HEK293 (cell line): ENCODE measurements at regions of chr6 and their contacts with region 1.

Region 1: GRCh38 chr6:158869826-158870648 is 50.9 kb upstream of the EZR start:
- H3K4me3 ChIP-seq: peak overlapping the region; percentile 64
- H3K27ac ChIP-seq: peak overlapping the region; percentile 62
- H3K4me1 ChIP-seq: no peaks in the 10 kb centered on the region
- CTCF ChIP-seq: no peak; the same call in 1 of the 2 replicates

Region 2: DNA sequence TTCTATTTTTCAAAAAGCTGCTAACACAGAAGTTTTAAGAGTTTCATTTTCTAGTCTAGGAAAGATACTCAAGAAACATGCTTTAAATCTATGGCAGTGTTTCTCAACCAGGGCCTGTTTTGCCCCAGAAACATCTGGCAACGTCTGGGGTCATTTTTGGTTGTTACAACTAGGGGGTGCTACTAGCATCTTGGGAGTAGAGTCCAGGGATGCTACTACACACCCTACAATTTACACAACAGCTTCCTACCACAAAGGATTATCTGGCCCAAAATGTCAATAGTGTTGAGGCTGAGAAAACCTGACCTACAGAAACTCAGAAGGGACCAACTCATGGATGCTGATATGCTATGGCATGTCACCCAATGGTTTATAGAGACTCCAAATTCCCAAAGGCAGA is 726.3 kb before region 1 on chr6:
- CTCF ChIA-PET with region 1: no interaction called
- POLR2A ChIA-PET with region 1: no interaction called
- H3K4me3 ChIP-seq: no peak overlapping the region
- H3K27ac ChIP-seq: no peak overlapping the region
- H3K4me1 ChIP-seq: no peaks in the 10 kb centered on the region
- CTCF ChIP-seq: no peak

Region 3: DNA sequence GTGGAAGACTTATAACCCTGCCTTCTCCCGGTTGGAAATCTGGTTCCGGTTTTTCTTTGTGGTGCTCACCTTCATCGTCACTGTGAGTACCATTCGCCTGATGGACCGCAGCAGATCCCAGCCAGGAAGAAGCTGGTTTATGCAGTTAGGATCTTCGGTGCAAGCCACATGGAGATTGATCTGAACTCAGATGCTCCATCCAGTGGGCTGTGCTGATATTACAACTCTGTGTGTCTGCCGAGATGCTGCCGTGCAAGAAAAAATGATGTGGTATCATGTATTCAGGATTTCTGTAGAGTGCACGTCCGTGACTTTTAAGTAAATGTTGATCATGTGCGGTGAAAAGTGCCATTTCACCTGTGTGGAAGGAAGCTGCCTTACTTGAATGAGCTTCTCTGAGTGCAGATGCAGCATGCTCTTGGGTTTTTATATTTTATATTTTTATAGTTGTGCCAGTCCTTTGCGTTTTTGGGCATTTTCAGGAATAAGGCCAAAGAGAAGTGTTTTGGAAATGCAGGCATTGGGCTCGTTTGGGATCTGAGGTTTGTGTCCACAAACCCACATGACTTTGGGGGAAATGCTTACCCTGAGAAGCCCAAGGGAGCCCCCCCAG is 264.7 kb before region 1 on chr6:
- CTCF ChIA-PET with region 1: no interaction called
- POLR2A ChIA-PET with region 1: no interaction called
- H3K4me3 ChIP-seq: no peak overlapping the region
- H3K27ac ChIP-seq: no peak overlapping the region
- H3K4me1 ChIP-seq: no peaks in the 10 kb centered on the region
- CTCF ChIP-seq: no peak; the same call in 1 of the 2 replicates

Region 4: GRCh38 chr6:158799051-158799792 is 70.8 kb before region 1 on chr6:
- CTCF ChIA-PET with region 1: no interaction called
- POLR2A ChIA-PET with region 1: interaction called, 10 read pairs
- H3K4me3 ChIP-seq: no peak overlapping the region
- H3K27ac ChIP-seq: peak overlapping the region; percentile 74
- H3K4me1 ChIP-seq: peaks cover 34% of the 10 kb centered on the region
- CTCF ChIP-seq: no peak

Region 5: GRCh38 chr6:158819213-158819909 is 50.7 kb before region 1 on chr6 and contains the start of gene EZR:
- CTCF ChIA-PET with region 1: interaction called, 3 read pairs
- POLR2A ChIA-PET with region 1: interaction called, 31 read pairs
- H3K4me3 ChIP-seq: peak within 1 kb of the TSS; percentile 80
- H3K27ac ChIP-seq: peak within 1 kb of the TSS; percentile 84
- H3K4me1 ChIP-seq: peaks cover 10% of the 10 kb centered on the region
- CTCF ChIP-seq: peak; percentile 41; the same call in 1 of the 2 replicates

Region 6: DNA sequence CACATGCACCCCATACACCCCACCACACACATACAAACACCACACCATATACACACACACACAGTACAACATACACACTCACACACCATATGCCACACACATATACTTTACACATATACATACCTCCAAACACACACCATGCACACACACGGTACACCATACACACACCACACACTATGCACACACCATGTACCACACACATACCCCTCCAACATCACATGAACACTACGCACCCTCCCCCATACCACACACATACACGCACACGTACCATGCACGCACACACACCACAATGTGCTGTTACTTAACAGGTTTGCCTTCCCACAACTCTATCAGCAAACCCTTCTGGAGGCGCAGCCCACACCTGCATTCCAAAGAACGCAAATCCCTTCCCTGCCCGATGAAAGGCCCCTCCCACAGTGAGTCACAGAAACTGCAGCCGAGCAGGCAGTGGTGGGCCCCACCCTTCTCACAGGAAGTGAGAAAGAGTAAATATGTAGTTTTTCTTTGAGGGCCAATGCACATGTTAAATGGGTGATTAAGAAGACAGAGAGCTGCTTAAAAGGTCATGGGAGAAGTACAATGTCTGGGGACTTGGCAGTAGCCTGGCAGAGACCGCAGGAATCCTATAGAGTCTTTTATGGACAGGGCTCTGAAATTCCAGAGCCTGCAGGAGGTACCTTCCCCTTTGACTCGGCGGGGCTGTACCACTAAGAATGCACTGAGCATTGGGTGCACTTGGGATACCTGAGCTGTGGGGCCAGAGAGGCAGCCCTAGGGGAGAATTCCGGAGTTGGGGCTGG is 16.8 kb before region 1 on chr6:
- CTCF ChIA-PET with region 1: interaction called, 3 read pairs
- POLR2A ChIA-PET with region 1: interaction called, 33 read pairs
- H3K4me3 ChIP-seq: no peak overlapping the region; the same call in 1 of the 2 replicates
- H3K27ac ChIP-seq: no peak overlapping the region; the same call in 1 of the 2 replicates
- H3K4me1 ChIP-seq: peaks cover 12% of the 10 kb centered on the region
- CTCF ChIP-seq: no peak

Region 7: GRCh38 chr6:158999666-159000403 is 129.8 kb after region 1 on chr6 and contains the start of gene RSPH3:
- CTCF ChIA-PET with region 1: no interaction called
- POLR2A ChIA-PET with region 1: interaction called, 15 read pairs
- H3K4me3 ChIP-seq: peak within 1 kb of the TSS; percentile 75
- H3K27ac ChIP-seq: peak within 1 kb of the TSS; percentile 93
- H3K4me1 ChIP-seq: no peaks in the 10 kb centered on the region
- CTCF ChIP-seq: peak; percentile 84